ENCODE measurements at regions of chr1 and their contacts with region 1.

Region 1: GRCh38 chr1:110565565-110565964 is 40.6 kb downstream of the KCNA2 start:
- DNase-seq: peak; percentile 76 to 98 (median 87)

Region 2: GRCh38 chr1:110554871-110555801 is 10.4 kb before region 1 on chr1:
- intact Hi-C with region 1: loop called (anchors 1 kb)
- DNase-seq: peak; percentile 63 to 96 (median 76)

Region 3: DNA sequence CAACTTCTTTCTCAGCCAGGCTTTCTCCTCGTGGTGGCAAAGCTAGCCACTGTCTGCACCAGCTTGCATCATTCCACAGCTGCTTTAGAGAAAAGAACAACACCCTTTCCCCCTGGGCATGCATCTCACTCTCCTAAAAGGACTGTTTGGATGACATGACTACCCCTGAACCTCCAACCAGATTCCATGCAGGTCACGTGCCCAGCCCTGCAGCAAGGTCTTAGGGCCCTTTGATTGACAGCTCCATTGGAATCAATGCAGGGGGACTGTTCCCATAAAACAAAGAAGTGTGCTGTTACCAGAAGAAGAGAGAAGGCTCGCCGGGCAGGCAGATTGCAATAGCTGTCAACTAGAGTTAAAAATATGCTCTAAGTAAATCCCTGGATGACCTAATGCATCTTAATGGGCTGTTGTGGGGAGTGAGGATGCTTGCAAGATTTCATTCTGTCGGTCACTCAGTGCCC is 16.1 kb after region 1 on chr1:
- intact Hi-C with region 1: no loop called
- DNase-seq: peak in 8 of 10 donors; percentile 20 to 89 (median 49)